A549 (cell line): ENCODE measurements at regions of chr6 and their contacts with region 1.

Region 1: GRCh38 chr6:127516666-127517273 is 2.4 kb downstream of the MTCL3 start:
- DNase-seq: peak; percentile 55 to 67
- ATAC-seq: peak in 1 of 2 experiments; percentile 58; a peak in 3 of 6 replicates
- H3K4me3 ChIP-seq: peak overlapping the region; percentile 72
- H3K27ac ChIP-seq: peak overlapping the region in 1 of 2 experiments; percentile 29; a peak in 1 of 6 replicates
- H3K4me1 ChIP-seq: peaks cover 26% of the 10 kb centered on the region
- CTCF ChIP-seq: peak; percentile 63
- EP300 ChIP-seq: no peak
- POLR2A ChIP-seq: no peak
- RAD21 ChIP-seq: peak in 1 of 2 experiments; percentile 36; a peak in 2 of 5 replicates

Region 2: GRCh38 chr6:127464881-127465459 is 51.8 kb before region 1 on chr6:
- CTCF ChIA-PET with region 1: interaction called, 14 read pairs
- POLR2A ChIA-PET with region 1: no interaction called
- DNase-seq: peak; percentile 55 to 58
- ATAC-seq: peak; percentile 98
- H3K4me3 ChIP-seq: no peak overlapping the region
- H3K27ac ChIP-seq: no peak overlapping the region
- H3K4me1 ChIP-seq: no peaks in the 10 kb centered on the region
- CTCF ChIP-seq: peak; percentile 76
- EP300 ChIP-seq: no peak
- POLR2A ChIP-seq: no peak
- RAD21 ChIP-seq: peak; percentile 78 to 85

Region 3: DNA sequence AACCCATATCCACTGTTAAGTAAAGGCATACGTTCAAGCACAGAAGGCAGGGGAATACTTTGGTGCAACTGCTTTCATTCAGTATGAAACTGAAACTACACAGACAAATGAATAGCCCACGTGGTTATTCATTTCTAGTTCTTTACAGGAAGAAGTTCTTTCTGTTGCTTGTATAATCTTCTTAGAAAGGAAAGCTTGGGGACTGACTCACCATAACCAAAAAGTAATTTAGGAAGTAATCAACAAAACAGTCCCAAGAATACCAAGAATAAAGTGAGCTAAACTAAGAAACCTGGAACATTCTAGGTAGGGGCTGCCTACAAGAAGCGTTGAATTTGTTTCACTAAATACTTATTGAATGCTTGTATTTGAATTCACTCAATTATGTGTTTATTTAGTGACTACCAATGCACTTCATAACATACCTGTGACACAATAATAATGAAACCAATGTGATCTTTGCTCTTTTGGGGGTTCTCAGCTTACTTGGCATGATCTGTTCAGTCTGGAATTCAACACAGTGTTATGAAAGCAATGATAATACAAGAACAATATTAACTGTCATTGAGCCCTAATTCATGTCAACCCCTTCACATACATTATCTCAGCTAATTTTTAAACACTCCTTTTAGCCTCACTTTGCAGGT is 32.4 kb before region 1 on chr6:
- CTCF ChIA-PET with region 1: interaction called, 12 read pairs
- POLR2A ChIA-PET with region 1: interaction called, 6 read pairs
- DNase-seq: peak; percentile 2 to 23
- ATAC-seq: peak; percentile 68 to 79
- H3K4me3 ChIP-seq: 0 out of 3 replicates have a peak overlapping the region, but pooled peaks have one; percentile 16
- H3K27ac ChIP-seq: peak overlapping the region; percentile 9 to 69; a peak in 4 of 6 replicates
- H3K4me1 ChIP-seq: peaks cover 44% of the 10 kb centered on the region
- CTCF ChIP-seq: no peak
- EP300 ChIP-seq: no peak
- POLR2A ChIP-seq: no peak
- RAD21 ChIP-seq: no peak

Region 4: GRCh38 chr6:127494240-127494767 is 22.5 kb before region 1 on chr6:
- CTCF ChIA-PET with region 1: interaction called, 12 read pairs
- POLR2A ChIA-PET with region 1: no interaction called
- DNase-seq: no peak
- ATAC-seq: no peak
- H3K4me3 ChIP-seq: no peak overlapping the region
- H3K27ac ChIP-seq: no peak overlapping the region
- H3K4me1 ChIP-seq: no peaks in the 10 kb centered on the region
- CTCF ChIP-seq: no peak
- EP300 ChIP-seq: no peak
- POLR2A ChIP-seq: no peak
- RAD21 ChIP-seq: no peak

Region 5: GRCh38 chr6:127503022-127503421 is 13.7 kb before region 1 on chr6:
- CTCF ChIA-PET with region 1: interaction called, 34 read pairs
- POLR2A ChIA-PET with region 1: no interaction called
- DNase-seq: no peak
- ATAC-seq: no peak; a peak in 1 of 6 replicates
- H3K4me3 ChIP-seq: no peak overlapping the region
- H3K27ac ChIP-seq: no peak overlapping the region
- H3K4me1 ChIP-seq: no peaks in the 10 kb centered on the region
- CTCF ChIP-seq: no peak
- EP300 ChIP-seq: no peak
- POLR2A ChIP-seq: no peak
- RAD21 ChIP-seq: no peak

Region 6: GRCh38 chr6:127533011-127533410 is 16.2 kb after region 1 on chr6:
- CTCF ChIA-PET with region 1: interaction called, 24 read pairs
- POLR2A ChIA-PET with region 1: interaction called, 4 read pairs
- DNase-seq: no peak
- ATAC-seq: no peak
- H3K4me3 ChIP-seq: no peak overlapping the region
- H3K27ac ChIP-seq: no peak overlapping the region
- H3K4me1 ChIP-seq: no peaks in the 10 kb centered on the region
- CTCF ChIP-seq: no peak
- EP300 ChIP-seq: no peak
- POLR2A ChIP-seq: no peak
- RAD21 ChIP-seq: no peak

Region 7: DNA sequence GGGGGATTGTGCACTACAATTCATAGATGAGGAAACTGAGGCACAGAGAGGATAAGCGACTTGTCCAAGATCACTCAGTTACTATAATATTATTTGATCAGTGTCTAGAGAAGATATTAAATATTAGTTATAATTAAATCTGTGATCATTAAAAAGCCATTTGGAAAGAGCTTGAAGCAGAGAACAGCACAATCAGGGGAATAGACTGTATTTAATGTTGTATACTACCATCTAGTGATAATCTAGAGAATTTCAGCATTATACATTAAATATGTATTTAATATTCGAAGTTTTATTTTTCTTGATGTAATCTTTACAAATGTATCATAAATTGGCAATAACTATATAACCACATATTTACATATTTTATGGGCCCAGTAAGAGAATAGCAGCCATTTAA is 22.5 kb after region 1 on chr6:
- CTCF ChIA-PET with region 1: interaction called, 24 read pairs
- POLR2A ChIA-PET with region 1: no interaction called
- DNase-seq: no peak
- ATAC-seq: peak; percentile 56 to 75; a peak in 4 of 6 replicates
- H3K4me3 ChIP-seq: no peak overlapping the region
- H3K27ac ChIP-seq: no peak overlapping the region
- H3K4me1 ChIP-seq: 0 out of 3 replicates have a peak, but pooled peaks cover 3% of the 10 kb centered on the region
- CTCF ChIP-seq: peak; percentile 62
- EP300 ChIP-seq: no peak
- POLR2A ChIP-seq: no peak
- RAD21 ChIP-seq: peak; percentile 62 to 79

Region 8: GRCh38 chr6:127710668-127711067 is 193.9 kb after region 1 on chr6:
- CTCF ChIA-PET with region 1: no interaction called
- POLR2A ChIA-PET with region 1: no interaction called
- DNase-seq: no peak
- ATAC-seq: no peak
- H3K4me3 ChIP-seq: no peak overlapping the region
- H3K27ac ChIP-seq: no peak overlapping the region
- H3K4me1 ChIP-seq: no peaks in the 10 kb centered on the region
- CTCF ChIP-seq: no peak
- EP300 ChIP-seq: no peak
- POLR2A ChIP-seq: no peak
- RAD21 ChIP-seq: no peak